T-cell (primary cell): ENCODE measurements at regions of chr15 and their contacts with region 1.

Region 1: DNA sequence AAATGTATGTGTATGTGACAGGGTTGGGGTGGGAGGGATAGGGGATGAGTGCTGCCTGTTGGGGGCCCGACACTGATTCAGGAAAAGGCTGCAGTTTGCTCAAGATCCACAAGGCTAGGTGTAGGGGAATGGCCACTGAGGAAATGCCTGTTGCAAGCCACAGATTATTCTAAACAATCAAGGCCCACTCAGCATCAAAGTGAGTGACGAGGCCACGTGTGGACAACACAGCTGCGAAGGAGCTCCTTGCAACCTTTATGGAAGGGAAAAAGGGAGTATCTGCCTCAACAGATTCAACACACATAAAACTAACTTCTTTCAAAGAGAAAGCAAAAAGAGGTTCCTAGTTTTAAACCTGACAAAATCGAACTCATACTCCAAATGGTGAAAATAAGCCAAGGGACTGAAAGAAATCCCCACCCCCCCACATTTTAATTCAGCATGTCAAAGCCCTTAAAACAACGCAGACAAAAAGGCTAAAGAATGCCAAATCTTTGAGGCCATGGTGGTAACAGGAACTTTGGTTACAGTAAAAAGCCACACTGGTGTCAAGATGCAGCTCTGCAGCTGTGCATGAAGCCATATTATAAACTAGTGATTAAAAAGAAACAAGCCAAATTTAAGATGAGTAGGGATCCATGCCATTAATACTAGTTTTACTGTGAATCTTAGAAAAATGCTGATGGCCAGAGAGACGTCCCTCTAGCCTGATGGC is 3.6 kb downstream of the POLG start:
- DNase-seq: no peak
- ATAC-seq: no peak
- H3K4me3 ChIP-seq: no peak overlapping the region
- H3K4me3 Mint-ChIP-seq: peak overlapping the region; percentile 57 to 70 (median 70)
- H3K27ac ChIP-seq: no peak overlapping the region
- H3K27ac Mint-ChIP-seq: peak overlapping the region; percentile 46 to 58
- H3K4me1 ChIP-seq: peaks cover 39 to 71% of the 10 kb centered on the region in 2 experiments
- H3K4me1 Mint-ChIP-seq: peaks cover 60 to 67% (median 62%) of the 10 kb centered on the region in 3 donors
- H3K27me3 ChIP-seq: no peaks in the 10 kb centered on the region
- H3K27me3 Mint-ChIP-seq: peaks cover 4 to 5% of the 10 kb centered on the region in 2 donors

Region 2: GRCh38 chr15:89196994-89197393 is 134.0 kb before region 1 on chr15:
- CTCF ChIA-PET with region 1: no interaction called
- POLR2A ChIA-PET with region 1: no interaction called
- DNase-seq: peak in 2 of 35 experiments; percentile 4 to 6
- ATAC-seq: no peak
- H3K4me3 ChIP-seq: no peak overlapping the region
- H3K4me3 Mint-ChIP-seq: no peak overlapping the region
- H3K27ac ChIP-seq: no peak overlapping the region
- H3K27ac Mint-ChIP-seq: peak overlapping the region; percentile 18 to 25
- H3K4me1 ChIP-seq: no peaks in the 10 kb centered on the region
- H3K4me1 Mint-ChIP-seq: peaks cover 0 to 8% (median 7%) of the 10 kb centered on the region in 3 donors
- H3K27me3 ChIP-seq: no peaks in the 10 kb centered on the region
- H3K27me3 Mint-ChIP-seq: no peaks in the 10 kb centered on the region

Region 3: DNA sequence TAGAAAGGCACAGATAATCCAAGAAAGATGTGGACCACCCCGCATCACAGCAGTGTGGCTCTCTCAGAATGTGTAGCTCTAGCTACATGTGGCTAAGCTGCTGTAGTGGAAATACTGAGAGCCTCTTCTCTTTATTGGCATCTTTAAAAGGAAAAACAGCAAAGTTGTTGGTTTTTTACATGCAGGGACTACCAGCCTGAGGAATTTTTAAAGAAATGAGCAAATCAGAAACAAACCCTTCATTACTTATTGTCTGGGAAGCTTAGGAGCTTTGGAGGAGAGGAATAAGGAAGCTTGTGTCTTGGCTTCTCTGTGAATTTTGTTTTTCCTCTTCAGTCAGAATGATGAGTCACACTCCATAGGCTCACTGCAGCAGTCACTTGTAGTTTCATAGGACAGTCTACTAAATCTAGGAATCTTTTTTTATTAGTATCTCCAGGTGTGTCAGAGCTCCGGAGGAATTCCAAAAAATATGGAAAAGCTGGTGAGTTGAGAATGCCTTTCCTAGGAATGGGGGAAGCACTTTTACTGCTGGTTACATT is 23.9 kb before region 1 on chr15:
- CTCF ChIA-PET with region 1: no interaction called
- POLR2A ChIA-PET with region 1: interaction called in 1 of 2 experiments, 16 read pairs
- DNase-seq: no peak
- ATAC-seq: no peak
- H3K4me3 ChIP-seq: no peak overlapping the region
- H3K4me3 Mint-ChIP-seq: no peak overlapping the region
- H3K27ac ChIP-seq: no peak overlapping the region
- H3K27ac Mint-ChIP-seq: no peak overlapping the region
- H3K4me1 ChIP-seq: no peaks in the 10 kb centered on the region
- H3K4me1 Mint-ChIP-seq: peaks cover 0 to 6% (median 4%) of the 10 kb centered on the region in 3 donors
- H3K27me3 ChIP-seq: no peaks in the 10 kb centered on the region
- H3K27me3 Mint-ChIP-seq: no peaks in the 10 kb centered on the region

Region 4: GRCh38 chr15:89320200-89320599 is 10.8 kb before region 1 on chr15:
- CTCF ChIA-PET with region 1: no interaction called
- POLR2A ChIA-PET with region 1: no interaction called
- DNase-seq: no peak
- ATAC-seq: no peak
- H3K4me3 ChIP-seq: no peak overlapping the region
- H3K4me3 Mint-ChIP-seq: no peak overlapping the region
- H3K27ac ChIP-seq: no peak overlapping the region
- H3K27ac Mint-ChIP-seq: peak overlapping the region in 1 of 2 donors; percentile 50
- H3K4me1 ChIP-seq: no peaks in the 10 kb centered on the region
- H3K4me1 Mint-ChIP-seq: peaks cover 3 to 17% (median 16%) of the 10 kb centered on the region in 3 donors
- H3K27me3 ChIP-seq: no peaks in the 10 kb centered on the region
- H3K27me3 Mint-ChIP-seq: no peaks in the 10 kb centered on the region